Mammary epithelial cell (primary cell): ENCODE measurements at regions of chrX and their contacts with region 1.

Region 1: DNA sequence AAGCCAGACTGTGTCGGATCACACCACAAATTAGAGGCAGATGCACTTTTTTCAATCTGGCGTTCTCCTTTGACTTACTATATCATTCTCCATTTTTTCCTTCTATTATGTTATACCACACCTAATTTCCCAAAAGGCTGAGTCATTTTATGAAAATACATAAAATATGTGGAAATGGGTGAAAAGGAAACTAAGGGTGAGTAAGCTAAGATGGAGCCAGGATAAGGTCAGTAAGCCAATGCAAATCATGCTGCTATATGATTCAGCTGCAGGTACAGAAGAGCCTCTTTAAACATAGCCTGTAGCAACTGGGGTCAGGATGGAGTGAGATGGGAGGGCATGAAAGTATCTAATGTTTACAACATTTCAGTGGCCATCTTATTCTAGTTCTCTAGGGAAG is 94.0 kb upstream of the TEX13A start:
- DNase-seq: peak; percentile 89
- H3K4me3 ChIP-seq: peak overlapping the region; percentile 32 to 51 (median 45)
- H3K27ac ChIP-seq: peak overlapping the region; percentile 94
- H3K4me1 ChIP-seq: peaks cover 7% of the 10 kb centered on the region
- H3K27me3 ChIP-seq: no peaks in the 10 kb centered on the region
- CTCF ChIP-seq: no peak

Region 2: GRCh38 chrX:104183685-104184084 is 1130.8 kb before region 1 on chrX:
- CTCF ChIA-PET with region 1: no interaction called
- dilution Hi-C with region 1: no loop called
- in situ Hi-C with region 1: no loop called
- intact Hi-C with region 1: no loop called
- DNase-seq: no peak
- H3K4me3 ChIP-seq: no peak overlapping the region
- H3K27ac ChIP-seq: no peak overlapping the region
- H3K4me1 ChIP-seq: no peaks in the 10 kb centered on the region
- H3K27me3 ChIP-seq: no peaks in the 10 kb centered on the region
- CTCF ChIP-seq: no peak

Region 3: DNA sequence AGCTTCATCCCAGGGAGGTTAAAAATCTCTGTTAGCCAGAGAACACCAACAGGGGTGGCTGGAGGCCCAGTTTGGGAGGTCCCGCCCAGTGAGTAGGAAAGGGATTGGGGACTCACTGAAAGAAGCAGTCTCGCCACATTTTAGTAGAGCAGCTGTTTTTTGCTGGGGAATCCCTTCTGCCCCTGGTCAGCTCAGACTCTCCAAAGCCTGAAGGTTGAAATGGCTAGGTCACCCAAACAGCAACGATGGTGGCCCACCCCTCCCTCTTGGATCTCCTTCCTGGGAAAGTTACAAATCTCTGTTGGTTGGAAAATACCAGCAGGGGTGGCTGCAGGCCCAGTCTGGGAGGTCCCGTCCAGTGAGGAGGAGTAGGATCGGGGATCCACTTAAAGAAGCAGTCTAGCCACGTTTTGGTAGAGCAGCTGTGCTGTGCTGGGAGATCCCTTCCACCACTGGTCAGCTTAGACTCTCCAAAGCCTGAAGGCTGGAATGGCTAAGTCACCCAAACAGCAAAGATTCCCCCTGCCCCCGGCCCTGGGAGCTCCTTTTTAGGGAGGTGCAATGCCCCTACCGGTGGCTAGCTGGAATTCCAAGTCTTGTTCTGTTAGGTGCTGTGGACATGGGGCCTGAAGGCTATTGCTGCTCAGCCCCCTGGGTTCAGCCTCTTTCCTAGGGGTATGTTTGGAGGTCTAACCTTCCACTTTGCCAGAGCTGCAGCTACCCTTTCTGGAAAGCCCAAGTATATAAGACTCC is 54.0 kb before region 1 on chrX:
- CTCF ChIA-PET with region 1: interaction called, 15 read pairs
- dilution Hi-C with region 1: no loop called
- in situ Hi-C with region 1: no loop called
- intact Hi-C with region 1: no loop called
- DNase-seq: no peak
- H3K4me3 ChIP-seq: no peak overlapping the region
- H3K27ac ChIP-seq: no peak overlapping the region
- H3K4me1 ChIP-seq: no peaks in the 10 kb centered on the region
- H3K27me3 ChIP-seq: peaks cover 3% of the 10 kb centered on the region
- CTCF ChIP-seq: peak; percentile 2 to 13

Region 4: DNA sequence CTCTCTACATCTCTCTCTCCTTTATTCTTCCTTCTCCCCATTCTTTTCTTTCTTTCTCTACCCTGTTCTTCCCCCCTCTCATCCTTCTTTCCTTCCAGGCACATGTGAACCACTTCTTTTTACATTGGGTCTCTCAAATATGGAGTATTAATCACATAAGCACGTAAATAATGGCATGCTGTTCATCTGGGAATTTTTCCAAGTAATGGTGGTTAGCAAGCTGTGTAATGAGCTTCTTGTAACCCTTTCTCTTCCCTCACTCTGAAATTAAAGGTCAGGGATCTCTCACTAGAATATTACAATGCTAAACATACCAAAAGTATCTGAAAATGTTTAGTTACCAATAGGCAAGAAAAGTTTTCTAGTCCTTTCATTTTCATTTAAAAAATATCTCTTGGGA is 145.9 kb after region 1 on chrX:
- CTCF ChIA-PET with region 1: no interaction called
- dilution Hi-C with region 1: no loop called
- in situ Hi-C with region 1: no loop called
- intact Hi-C with region 1: loop called (anchors 10 kb)
- DNase-seq: peak; percentile 67
- H3K4me3 ChIP-seq: no peak overlapping the region
- H3K27ac ChIP-seq: peak overlapping the region; percentile 72
- H3K4me1 ChIP-seq: peaks cover 20% of the 10 kb centered on the region
- H3K27me3 ChIP-seq: no peaks in the 10 kb centered on the region
- CTCF ChIP-seq: no peak

Region 5: DNA sequence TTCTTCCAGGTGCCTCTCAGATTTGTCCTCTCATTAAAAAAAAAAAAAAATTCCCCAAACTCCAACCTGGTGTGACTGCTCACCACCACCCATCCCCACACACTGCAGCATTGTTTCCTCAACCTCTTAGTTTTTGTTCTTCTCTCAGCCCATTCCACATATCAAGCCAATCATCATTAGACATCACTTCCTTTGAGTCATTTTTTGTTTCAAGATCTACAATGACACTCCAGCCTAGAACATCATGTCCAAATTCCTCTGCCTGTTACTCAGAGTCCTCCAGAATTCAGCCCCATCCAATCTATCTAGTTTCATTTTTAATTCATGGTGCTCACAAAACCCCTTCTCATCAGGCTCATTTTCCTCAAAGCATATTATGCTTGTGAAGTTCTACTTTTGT is 168.5 kb after region 1 on chrX:
- CTCF ChIA-PET with region 1: no interaction called
- dilution Hi-C with region 1: no loop called
- in situ Hi-C with region 1: no loop called
- intact Hi-C with region 1: loop called (anchors 5 kb)
- DNase-seq: peak; percentile 95
- H3K4me3 ChIP-seq: peak overlapping the region in 1 of 3 experiments; percentile 2
- H3K27ac ChIP-seq: peak overlapping the region; percentile 99
- H3K4me1 ChIP-seq: peaks cover 43% of the 10 kb centered on the region
- H3K27me3 ChIP-seq: no peaks in the 10 kb centered on the region
- CTCF ChIP-seq: no peak

Region 6: DNA sequence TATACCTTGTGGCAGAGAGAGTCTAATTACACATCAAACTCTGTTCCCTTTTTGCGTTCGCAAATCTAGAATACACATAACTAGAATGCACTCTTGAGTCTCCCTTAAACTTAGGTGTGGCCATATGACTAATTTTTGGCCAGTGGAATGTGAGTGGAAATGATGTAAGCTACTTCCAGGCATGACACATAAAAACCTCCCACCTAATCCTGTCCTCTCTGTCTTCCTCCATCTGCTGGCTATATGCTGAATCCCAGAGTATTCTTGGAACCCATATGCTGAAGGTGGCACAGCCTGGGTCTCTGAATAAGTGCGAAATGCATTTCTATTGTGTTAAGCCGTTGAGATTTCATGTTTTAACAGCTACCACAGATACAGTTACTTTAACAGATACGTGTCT is 237.9 kb after region 1 on chrX:
- CTCF ChIA-PET with region 1: no interaction called
- dilution Hi-C with region 1: no loop called
- in situ Hi-C with region 1: no loop called
- intact Hi-C with region 1: loop called (anchors 1 kb)
- DNase-seq: peak; percentile 94
- H3K4me3 ChIP-seq: no peak overlapping the region
- H3K27ac ChIP-seq: peak overlapping the region; percentile 89
- H3K4me1 ChIP-seq: peaks cover 19% of the 10 kb centered on the region
- H3K27me3 ChIP-seq: no peaks in the 10 kb centered on the region
- CTCF ChIP-seq: peak; percentile 47 to 55

Region 7: DNA sequence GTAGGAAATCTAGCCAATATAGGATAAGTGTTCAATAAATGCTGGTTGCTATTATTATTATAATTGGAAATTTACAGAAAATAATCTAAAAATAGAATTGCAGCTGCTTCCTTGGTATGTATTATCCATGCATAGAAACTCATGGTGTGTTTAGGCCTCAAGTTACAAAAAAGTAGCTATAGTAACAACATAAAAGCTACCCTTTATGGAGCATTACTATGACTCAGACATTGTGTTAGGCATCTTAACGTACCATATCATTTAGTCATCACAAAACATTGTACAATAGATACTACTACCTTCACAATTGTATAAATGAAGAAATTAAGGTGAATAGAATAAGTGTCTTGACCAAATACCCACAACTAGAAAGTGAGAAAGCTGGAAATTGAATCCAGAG is 381.0 kb after region 1 on chrX:
- CTCF ChIA-PET with region 1: no interaction called
- dilution Hi-C with region 1: no loop called
- in situ Hi-C with region 1: no loop called
- intact Hi-C with region 1: loop called (anchors 5 kb)
- DNase-seq: peak; percentile 82
- H3K4me3 ChIP-seq: no peak overlapping the region
- H3K27ac ChIP-seq: peak overlapping the region; percentile 93
- H3K4me1 ChIP-seq: peaks cover 7% of the 10 kb centered on the region
- H3K27me3 ChIP-seq: no peaks in the 10 kb centered on the region
- CTCF ChIP-seq: no peak